ENCODE measurements at regions of chr2 and their contacts with region 1.

Region 1: GRCh38 chr2:46471-47345 is at the start of gene FAM110C:
- DNase-seq: peak; percentile 78
- H3K4me3 Mint-ChIP-seq: peak within 1 kb of the TSS; percentile 86
- H3K27ac Mint-ChIP-seq: peak within 1 kb of the TSS; percentile 98
- H3K4me1 Mint-ChIP-seq: peaks cover 21% of the 10 kb centered on the region
- H3K27me3 Mint-ChIP-seq: no peaks in the 10 kb centered on the region
- CTCF ChIP-seq: no peak
- total RNA-seq, gene FAM110C: 8.3 and 10.3 TPM in 2 replicates

Region 2: DNA sequence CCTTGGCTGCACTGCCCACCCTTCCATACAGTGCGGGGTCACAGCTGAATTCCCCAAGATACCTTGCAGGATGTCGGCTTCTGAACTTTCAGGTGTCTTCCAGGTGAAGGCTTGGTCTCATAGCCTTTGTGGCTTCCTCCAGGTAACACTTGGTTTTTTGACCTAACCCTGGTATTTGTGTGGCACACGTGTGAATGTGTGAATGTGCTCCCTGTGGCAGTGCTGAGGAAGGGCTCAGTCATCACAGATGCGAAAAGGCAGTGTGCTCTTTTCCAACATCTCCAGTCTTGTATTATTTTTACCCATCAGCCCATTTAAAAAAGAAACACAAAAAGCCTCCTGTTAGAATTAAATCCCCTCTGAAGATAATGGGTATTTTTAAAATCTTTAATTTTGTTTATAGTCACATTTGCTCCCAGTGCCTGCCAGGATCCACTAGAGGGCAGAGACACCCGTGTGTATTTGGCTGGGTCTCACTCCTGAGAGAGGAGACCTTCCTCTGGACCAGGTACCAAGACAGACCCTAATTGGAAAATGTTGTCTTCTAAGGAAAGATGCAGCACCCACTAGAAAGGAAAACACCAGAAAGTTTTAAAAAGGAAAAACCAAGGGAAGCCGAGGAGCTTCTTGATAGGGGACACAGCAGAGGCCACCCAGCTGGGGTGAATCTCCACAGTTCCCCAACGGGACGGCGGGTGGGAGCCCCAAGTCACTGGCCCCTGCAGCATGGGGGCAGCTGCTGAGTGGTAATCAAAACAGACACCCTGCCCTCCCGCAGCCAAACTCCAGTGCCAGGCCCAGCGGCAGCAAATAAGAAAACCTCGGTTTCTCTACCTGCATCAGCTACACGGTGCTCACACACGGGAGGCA is 28.1 kb before region 1 on chr2:
- CTCF ChIA-PET with region 1: interaction called, 54 read pairs
- POLR2A ChIA-PET with region 1: interaction called, 35 read pairs
- intact Hi-C with region 1: no loop called
- DNase-seq: peak; percentile 46
- H3K4me3 Mint-ChIP-seq: no peak overlapping the region
- H3K27ac Mint-ChIP-seq: no peak overlapping the region
- H3K4me1 Mint-ChIP-seq: peaks cover 9% of the 10 kb centered on the region
- H3K27me3 Mint-ChIP-seq: no peaks in the 10 kb centered on the region
- CTCF ChIP-seq: peak; percentile 74

Region 3: DNA sequence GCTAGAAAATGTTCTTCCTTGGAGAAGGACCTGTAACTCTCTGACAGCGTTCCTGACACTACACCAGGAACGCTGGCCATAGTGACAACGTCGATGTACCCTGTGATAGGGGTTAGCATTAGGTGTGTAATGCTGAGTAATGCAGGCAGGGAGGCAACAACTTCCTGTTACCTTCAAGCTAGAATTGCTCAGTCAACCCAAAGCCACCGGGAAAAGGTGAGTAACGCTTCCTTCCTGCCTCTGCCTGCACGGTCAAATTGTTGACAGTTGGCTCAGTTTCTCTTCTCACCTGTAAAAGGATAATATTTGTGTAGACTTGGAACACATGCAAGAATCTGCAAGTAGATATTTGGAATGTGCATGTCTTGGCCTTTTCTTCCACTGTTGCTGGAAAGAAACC is 13.1 kb before region 1 on chr2:
- CTCF ChIA-PET with region 1: interaction called, 5 read pairs
- POLR2A ChIA-PET with region 1: interaction called, 89 read pairs
- intact Hi-C with region 1: no loop called
- DNase-seq: peak; percentile 89
- H3K4me3 Mint-ChIP-seq: peak overlapping the region; percentile 14
- H3K27ac Mint-ChIP-seq: peak overlapping the region; percentile 79
- H3K4me1 Mint-ChIP-seq: peaks cover 34% of the 10 kb centered on the region
- H3K27me3 Mint-ChIP-seq: no peaks in the 10 kb centered on the region
- CTCF ChIP-seq: no peak

Region 4: DNA sequence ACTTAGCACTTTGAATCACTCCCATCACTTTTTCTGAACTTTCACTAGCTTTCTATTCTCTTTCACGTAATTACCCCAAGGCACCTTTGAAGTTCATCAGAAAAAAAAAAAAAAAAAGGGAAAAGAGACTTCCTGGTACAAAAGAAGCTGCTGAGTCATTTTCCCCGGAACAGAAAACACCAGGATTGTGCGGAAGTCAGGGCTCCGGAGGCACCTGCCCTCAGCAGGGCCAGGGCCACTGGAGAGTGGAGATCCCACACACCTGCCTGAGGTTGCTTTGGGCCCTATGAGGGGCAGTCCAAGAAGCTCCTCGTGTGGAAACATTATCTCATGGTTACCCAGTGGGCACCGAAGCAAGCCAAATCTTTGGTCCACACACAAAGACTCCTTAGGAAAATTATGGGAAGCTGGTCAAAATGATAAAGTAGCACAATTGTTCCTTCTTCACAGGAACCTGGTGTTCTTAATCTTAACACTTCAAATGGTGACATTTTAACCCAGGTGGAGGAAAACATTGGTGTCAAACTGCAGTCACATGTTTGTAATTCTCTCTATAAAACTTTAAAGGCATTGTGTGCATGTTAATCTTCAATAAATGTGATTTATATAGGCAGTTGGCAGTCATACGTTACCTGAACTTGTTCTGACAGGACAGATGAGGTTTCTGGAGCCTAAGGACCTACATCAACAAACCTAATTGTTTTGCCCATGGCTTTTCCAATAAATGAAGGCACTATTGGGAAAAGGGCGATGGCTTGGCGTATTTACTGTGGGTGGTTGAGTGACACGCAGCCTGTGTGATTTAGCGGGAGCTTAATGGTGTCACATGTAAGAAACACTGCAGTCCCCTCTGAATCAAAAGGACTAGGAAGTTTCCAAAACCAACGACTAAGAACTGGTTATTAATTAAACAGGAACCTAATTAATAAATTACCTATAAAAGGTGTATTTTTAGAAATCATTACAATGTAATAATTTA is 22.9 kb after region 1 on chr2:
- CTCF ChIA-PET with region 1: interaction called, 9 read pairs
- POLR2A ChIA-PET with region 1: interaction called, 87 read pairs
- intact Hi-C with region 1: no loop called
- DNase-seq: peak; percentile 63
- H3K4me3 Mint-ChIP-seq: peak overlapping the region; percentile 39
- H3K27ac Mint-ChIP-seq: peak overlapping the region; percentile 91
- H3K4me1 Mint-ChIP-seq: peaks cover 25% of the 10 kb centered on the region
- H3K27me3 Mint-ChIP-seq: no peaks in the 10 kb centered on the region
- CTCF ChIP-seq: no peak

Region 5: DNA sequence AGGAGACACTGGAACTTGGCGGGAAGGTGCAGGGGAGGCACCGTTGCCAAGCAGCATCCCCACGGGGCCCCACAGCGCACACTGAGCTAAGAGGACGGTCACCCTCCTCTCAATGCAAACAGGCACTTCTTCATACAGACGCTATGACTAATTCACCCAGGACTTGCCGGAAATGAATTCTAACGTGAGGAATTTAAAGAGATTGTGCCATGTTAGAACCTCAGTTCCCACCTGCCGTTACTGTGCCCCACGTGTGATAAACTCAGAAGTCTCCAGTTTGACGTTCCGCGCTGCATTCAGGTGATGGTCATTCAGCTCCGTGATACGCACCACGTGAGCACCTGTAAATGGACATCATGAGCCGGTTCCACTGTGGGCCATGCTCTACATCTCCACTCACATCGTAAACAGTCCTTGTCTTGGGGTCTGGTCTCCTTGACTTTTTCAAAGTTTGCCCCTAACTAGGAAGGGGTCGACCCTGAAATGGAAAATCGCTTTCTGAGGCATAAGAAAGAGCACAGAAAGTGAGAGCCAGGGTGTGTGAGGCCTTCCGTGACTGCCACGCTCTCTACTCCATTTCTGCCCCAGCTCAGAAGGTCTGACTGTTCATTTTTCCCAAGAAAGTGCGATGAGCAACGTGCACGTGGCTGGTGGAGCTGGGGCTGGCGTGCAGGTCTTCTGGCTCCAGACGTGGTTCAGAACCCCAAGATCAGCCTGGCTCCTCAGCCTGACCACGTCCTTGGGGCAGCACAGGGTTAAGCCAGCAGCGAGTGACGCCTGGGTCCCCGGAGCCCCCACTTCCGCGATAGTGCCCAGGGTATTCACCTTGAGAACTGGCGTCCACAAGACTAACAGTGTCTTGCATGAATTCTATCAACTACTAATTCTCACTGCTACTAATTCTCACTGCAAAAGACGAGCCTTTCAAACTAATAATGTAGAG is 595.4 kb after region 1 on chr2:
- CTCF ChIA-PET with region 1: no interaction called
- POLR2A ChIA-PET with region 1: no interaction called
- intact Hi-C with region 1: no loop called
- DNase-seq: peak; percentile 12
- H3K4me3 Mint-ChIP-seq: no peak overlapping the region
- H3K27ac Mint-ChIP-seq: no peak overlapping the region
- H3K4me1 Mint-ChIP-seq: peaks cover 4% of the 10 kb centered on the region
- H3K27me3 Mint-ChIP-seq: peaks cover 30% of the 10 kb centered on the region
- CTCF ChIP-seq: no peak